GM12878 (cell line): ENCODE measurements at regions of chr2 and their contacts with region 1.

Region 1: DNA sequence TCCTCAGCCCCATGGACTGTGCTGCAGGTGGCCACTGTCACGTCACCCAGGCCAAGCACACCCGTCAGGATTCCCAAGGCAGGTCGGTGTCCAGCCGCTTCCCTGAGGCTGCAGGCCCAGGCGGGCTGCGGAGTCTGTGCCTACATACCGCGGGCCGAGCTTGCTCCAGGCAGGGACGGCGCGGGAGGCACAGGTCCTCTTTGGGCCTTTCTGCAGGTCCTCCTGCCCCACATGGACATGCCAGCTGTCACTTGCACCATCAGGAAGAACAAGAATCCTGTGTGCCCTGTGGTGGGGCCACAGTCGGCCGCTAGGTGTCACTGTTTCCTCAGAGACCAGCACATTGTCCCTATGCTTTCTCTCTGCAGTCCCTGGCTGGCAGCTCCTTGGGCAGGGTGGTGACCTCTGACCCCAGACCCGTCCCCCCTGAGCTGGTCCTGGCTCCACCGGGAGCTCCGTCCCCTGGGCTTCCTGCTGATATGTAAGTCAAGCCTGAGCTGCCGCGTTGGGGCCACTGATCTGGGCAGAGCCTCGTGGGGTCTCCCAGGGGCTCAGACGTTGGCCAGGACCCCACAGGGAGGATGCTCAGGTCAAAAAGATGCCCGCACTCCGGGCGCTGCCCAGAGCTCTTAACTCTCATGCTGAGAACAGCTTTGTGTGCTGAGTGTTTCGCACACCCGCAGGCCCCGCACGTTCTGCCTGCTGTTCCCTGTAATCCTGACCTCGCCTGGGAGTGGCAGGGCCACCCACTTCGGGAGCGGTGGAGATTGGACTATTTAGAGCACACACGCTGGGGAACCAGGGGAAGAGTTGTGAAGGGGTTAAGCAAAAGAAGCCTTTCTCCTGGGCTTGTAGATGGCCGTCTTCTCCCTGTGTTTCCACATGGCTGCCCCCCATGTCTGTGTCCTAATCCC is 17.3 kb upstream of the AGXT start:
- DNase-seq: peak; percentile 12
- ATAC-seq: peak; percentile 99
- H3K4me3 ChIP-seq: no peak overlapping the region
- H3K27ac ChIP-seq: no peak overlapping the region
- H3K4me1 ChIP-seq: no peaks in the 10 kb centered on the region
- H3K27me3 ChIP-seq: no peaks in the 10 kb centered on the region
- CTCF ChIP-seq: peak; percentile 94 to 95 (median 94); a peak in 5 of 6 replicates
- EP300 ChIP-seq: no peak
- POLR2A ChIP-seq: no peak
- RAD21 ChIP-seq: peak; percentile 90

Region 2: GRCh38 chr2:240861554-240861953 is 10.2 kb after region 1 on chr2:
- CTCF ChIA-PET with region 1: interaction called, 12 read pairs
- POLR2A ChIA-PET with region 1: no interaction called
- RAD21 ChIA-PET with region 1: no interaction called
- SMC1A ChIA-PET with region 1: interaction called, 3 read pairs
- in situ Hi-C with region 1: no loop called
- intact Hi-C with region 1: no loop called
- DNase-seq: no peak
- ATAC-seq: no peak
- H3K4me3 ChIP-seq: no peak overlapping the region
- H3K27ac ChIP-seq: no peak overlapping the region
- H3K4me1 ChIP-seq: no peaks in the 10 kb centered on the region
- H3K27me3 ChIP-seq: peaks cover 1 to 6% of the 10 kb centered on the region in 2 experiments; a peak in 2 of 4 replicates
- CTCF ChIP-seq: no peak
- EP300 ChIP-seq: no peak
- POLR2A ChIP-seq: no peak
- RAD21 ChIP-seq: no peak

Region 3: GRCh38 chr2:241074901-241075540 is 223.7 kb after region 1 on chr2:
- CTCF ChIA-PET with region 1: no interaction called
- POLR2A ChIA-PET with region 1: no interaction called
- RAD21 ChIA-PET with region 1: no interaction called
- SMC1A ChIA-PET with region 1: no interaction called
- in situ Hi-C with region 1: no loop called
- intact Hi-C with region 1: loop called (anchors 5 kb)
- DNase-seq: no peak
- ATAC-seq: no peak
- H3K4me3 ChIP-seq: no peak overlapping the region
- H3K27ac ChIP-seq: no peak overlapping the region
- H3K4me1 ChIP-seq: no peaks in the 10 kb centered on the region
- H3K27me3 ChIP-seq: no peaks in the 10 kb centered on the region
- CTCF ChIP-seq: no peak
- EP300 ChIP-seq: no peak
- POLR2A ChIP-seq: no peak
- RAD21 ChIP-seq: no peak

Region 4: GRCh38 chr2:241217320-241218031 is 366.1 kb after region 1 on chr2:
- CTCF ChIA-PET with region 1: no interaction called
- POLR2A ChIA-PET with region 1: no interaction called
- RAD21 ChIA-PET with region 1: no interaction called
- SMC1A ChIA-PET with region 1: no interaction called
- in situ Hi-C with region 1: no loop called
- intact Hi-C with region 1: loop called (anchors 10 kb)
- DNase-seq: no peak
- ATAC-seq: peak; percentile 80
- H3K4me3 ChIP-seq: peak overlapping the region; percentile 64
- H3K27ac ChIP-seq: no peak overlapping the region
- H3K4me1 ChIP-seq: no peaks in the 10 kb centered on the region
- H3K27me3 ChIP-seq: no peaks in the 10 kb centered on the region
- CTCF ChIP-seq: peak in 1 of 3 experiments; percentile 5; a peak in 1 of 6 replicates
- EP300 ChIP-seq: no peak
- POLR2A ChIP-seq: no peak
- RAD21 ChIP-seq: no peak

Region 5: DNA sequence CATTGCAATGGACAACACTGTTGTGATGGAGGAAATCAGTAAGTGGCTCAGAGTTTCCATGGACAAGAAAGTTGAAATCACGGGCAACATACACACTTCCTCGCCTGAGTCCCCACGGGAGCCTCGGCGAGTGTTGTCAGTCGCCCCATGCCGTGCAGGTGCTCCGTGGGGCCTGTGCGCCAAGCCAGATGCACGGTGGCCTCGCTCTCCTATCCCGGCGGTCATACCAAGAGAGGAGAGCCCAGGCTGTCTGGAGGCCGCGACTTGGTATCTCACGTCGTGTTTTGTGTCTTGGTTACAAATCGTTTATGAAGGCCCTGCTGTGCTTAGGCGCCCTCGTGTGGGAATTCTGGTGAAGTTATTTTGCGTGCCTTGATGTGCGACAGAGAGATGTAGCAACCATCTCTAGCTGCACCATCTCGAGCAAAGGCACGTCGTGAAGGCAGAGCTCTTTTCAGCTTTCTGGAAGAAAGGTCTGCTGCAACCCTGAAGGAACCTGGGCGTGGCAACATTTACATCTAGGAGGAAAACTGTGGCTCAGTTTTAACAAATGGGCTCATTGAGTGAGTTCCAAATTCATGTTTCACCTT is 807.9 kb after region 1 on chr2:
- CTCF ChIA-PET with region 1: no interaction called
- POLR2A ChIA-PET with region 1: no interaction called
- RAD21 ChIA-PET with region 1: no interaction called
- SMC1A ChIA-PET with region 1: no interaction called
- in situ Hi-C with region 1: loop called (anchors 10 kb)
- intact Hi-C with region 1: no loop called
- DNase-seq: no peak
- ATAC-seq: peak; percentile 74
- H3K4me3 ChIP-seq: no peak overlapping the region
- H3K27ac ChIP-seq: no peak overlapping the region
- H3K4me1 ChIP-seq: no peaks in the 10 kb centered on the region
- H3K27me3 ChIP-seq: no peaks in the 10 kb centered on the region
- CTCF ChIP-seq: peak; percentile 52 to 62 (median 55)
- EP300 ChIP-seq: no peak
- POLR2A ChIP-seq: no peak; the same call in 1 of the 2 replicates
- RAD21 ChIP-seq: peak; percentile 70